ENCODE measurements at regions of chr18 and their contacts with region 1.

Region 1: DNA sequence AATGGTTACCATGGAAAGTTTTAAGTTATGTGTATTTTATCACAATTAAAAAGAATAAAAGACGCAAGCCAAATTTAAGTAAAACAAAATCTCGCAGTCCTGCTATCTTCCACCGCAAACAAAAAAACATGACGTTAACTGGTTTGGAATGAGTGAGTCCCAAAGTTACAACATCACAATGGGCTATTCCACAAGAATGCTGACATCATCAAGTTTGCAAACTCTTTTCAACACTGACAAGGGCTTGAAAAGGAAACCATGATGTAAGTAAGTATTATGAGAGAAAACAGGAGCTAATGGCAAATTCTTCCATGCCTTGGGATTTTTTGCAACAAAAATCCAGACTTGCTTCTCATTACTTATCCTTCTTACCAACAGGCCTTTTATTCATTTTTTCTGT is 31.1 kb downstream of the SIGLEC15 start:
- DNase-seq: no peak
- H3K4me3 ChIP-seq: no peak overlapping the region
- H3K27ac ChIP-seq: no peak overlapping the region
- H3K4me1 ChIP-seq: no peaks in the 10 kb centered on the region
- H3K27me3 ChIP-seq: no peaks in the 10 kb centered on the region
- CTCF ChIP-seq: no peak

Region 2: DNA sequence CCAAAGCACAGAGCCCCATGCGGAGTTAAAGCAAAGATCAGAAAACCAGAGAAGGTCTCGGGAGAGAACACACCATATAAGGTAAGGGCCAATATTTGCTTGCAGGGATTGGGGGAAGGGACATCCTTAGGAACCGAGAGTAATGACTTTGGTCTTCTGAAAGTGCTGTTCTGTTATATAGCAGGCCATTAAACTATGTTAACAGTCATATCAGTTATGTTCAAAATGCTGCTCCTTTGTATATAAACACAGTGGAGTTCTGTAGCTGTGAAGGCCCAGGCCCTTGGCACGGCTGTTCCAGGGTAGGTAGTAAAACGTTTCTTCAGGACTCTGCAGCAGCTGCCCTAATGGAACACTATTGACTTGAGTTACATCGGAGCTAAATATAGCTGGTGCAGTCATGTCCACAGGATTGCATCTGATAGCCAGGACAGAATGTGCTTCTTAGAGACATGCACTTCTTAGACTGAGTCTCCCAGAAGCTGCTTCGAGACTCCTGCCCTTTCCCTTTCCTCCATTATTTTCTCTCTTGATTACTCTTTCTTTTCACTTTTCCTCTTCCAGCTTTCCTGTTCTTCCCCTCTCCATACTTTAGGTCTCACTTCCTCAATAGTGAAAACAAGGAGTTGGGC is 1053.4 kb before region 1 on chr18:
- CTCF ChIA-PET with region 1: no interaction called
- POLR2A ChIA-PET with region 1: no interaction called
- intact Hi-C with region 1: no loop called
- DNase-seq: no peak
- H3K4me3 ChIP-seq: no peak overlapping the region
- H3K27ac ChIP-seq: no peak overlapping the region
- H3K4me1 ChIP-seq: peaks cover 8% of the 10 kb centered on the region
- H3K27me3 ChIP-seq: no peaks in the 10 kb centered on the region
- CTCF ChIP-seq: no peak

Region 3: DNA sequence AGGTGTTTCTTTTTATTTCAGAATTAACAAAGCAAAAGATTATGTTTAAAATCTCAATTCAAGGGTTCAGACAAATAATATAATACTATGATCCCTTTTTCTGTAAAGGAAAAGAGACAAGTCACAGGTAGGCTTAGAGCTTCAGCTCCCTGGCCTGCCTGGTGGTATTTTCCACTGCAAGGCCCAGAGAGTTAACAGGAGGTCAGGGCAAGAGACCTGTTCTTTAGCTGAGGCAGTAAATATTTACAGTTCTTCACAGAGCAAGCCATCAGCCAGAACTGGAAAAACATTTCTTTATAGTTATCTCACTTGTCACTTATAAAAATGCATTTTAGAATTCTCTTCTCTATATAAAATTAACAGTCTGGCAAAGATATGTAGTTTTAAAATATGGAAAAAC is 40.5 kb after region 1 on chr18:
- CTCF ChIA-PET with region 1: no interaction called
- POLR2A ChIA-PET with region 1: no interaction called
- intact Hi-C with region 1: loop called (anchors 2 kb)
- DNase-seq: no peak
- H3K4me3 ChIP-seq: no peak overlapping the region
- H3K27ac ChIP-seq: no peak overlapping the region
- H3K4me1 ChIP-seq: no peaks in the 10 kb centered on the region
- H3K27me3 ChIP-seq: no peaks in the 10 kb centered on the region
- CTCF ChIP-seq: no peak